MCF 10A (cell line): ENCODE measurements at regions of chr12 and their contacts with region 1.

Region 1: DNA sequence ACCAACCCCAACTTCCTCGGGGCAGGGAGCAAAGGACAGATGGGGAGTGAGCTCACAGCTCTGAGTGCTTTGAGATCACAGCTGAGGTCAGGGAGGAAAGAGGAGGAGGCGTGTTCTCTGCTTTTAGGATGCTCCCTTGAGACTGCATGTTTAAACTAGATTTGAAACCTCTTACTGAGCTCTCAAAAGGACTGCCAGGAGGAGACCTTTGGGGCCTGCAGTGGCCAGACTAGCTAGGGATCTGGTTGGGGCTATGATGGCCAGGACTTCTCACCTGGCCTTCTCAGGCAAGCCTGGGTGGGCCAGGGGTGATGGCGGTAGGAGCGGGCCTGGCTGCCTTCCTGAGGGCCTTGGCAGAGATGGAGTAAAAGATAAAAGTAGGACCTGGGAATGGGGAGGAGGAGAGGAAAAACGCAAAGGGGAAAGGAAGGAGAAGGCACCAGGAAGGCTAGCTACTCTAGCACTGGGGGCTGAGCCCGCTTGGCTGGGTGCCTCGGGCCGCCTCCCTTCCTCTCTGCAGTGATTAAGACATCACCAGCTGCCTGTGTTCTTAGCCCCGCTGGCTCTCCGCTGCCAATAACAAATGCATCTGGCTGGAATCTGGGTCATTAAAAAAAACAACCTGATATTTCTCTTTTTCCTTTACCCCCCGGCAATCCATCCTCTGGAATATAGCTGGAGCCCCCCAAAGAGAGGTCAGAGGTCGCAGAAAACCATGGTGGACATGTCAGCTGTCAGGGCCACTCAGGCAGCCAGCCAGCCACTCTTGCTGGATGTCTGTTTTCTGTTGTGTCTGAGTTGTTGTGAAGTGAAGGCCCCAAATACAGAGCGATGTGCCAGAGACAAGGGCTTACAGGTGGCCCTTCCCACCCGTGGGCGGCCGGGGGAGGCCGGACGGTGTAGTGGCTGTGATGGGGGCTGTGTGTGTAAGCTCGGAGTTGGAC is 141.3 kb downstream of the TSPAN9 start:
- DNase-seq: peak; percentile 87
- H3K4me3 Mint-ChIP-seq: peak overlapping the region; percentile 2
- H3K27ac Mint-ChIP-seq: peak overlapping the region; percentile 95
- H3K4me1 Mint-ChIP-seq: peaks cover 28% of the 10 kb centered on the region
- H3K27me3 Mint-ChIP-seq: no peaks in the 10 kb centered on the region
- CTCF ChIP-seq: no peak

Region 2: GRCh38 chr12:3081886-3082285 is 136.6 kb before region 1 on chr12:
- CTCF ChIA-PET with region 1: no interaction called
- POLR2A ChIA-PET with region 1: no interaction called
- intact Hi-C with region 1: no loop called
- DNase-seq: no peak
- H3K4me3 Mint-ChIP-seq: no peak overlapping the region
- H3K27ac Mint-ChIP-seq: no peak overlapping the region
- H3K4me1 Mint-ChIP-seq: no peaks in the 10 kb centered on the region
- H3K27me3 Mint-ChIP-seq: no peaks in the 10 kb centered on the region
- CTCF ChIP-seq: no peak

Region 3: DNA sequence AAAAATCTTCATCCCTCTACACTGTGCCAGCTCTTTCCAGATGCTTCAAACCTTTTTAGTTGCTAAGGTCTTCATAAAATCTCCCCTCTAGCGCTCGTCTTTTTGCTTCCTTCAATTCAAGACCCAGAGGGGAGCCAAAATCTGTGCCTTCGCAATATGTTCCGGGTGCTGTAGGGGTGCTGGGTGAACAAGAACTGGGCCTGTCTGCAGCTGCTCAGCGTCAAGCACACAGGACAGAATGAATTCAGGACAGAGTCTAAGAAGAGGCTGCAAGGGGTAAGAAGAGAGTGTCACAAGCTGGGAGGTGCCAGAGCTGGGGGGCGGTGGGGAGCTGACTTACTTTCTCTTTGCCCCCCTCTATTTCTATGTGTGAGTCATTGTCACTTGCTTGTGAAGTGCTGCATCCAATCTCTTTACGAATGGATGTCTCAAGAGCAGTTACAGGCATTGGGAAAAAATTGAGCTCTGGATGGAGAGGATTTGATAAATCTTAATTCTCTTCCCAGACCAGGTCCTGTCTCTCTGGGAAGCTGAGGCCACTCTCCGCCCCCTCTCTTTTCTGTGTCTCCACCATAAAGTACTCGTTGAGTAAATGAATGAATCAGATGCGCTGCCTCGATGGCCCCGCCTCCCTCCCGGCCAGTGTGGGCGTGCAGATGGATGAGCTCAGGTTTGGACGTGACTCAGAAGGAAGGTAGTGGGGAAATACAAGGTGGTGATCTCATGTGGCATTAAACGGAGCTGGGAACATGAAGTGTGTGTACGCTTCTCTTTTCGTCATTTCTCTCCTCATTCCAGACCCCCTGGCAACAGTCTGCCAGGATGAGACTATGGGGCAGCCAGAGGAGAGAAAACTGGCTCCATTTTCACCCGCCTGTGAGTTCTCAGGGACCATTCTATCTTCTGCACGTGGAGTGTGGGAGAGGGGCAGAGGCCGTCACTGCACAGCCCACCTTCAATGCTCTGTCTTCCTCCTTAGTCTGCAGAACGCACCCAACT is 50.0 kb before region 1 on chr12:
- CTCF ChIA-PET with region 1: interaction called, 4 read pairs
- POLR2A ChIA-PET with region 1: interaction called, 5 read pairs
- intact Hi-C with region 1: loop called (anchors 1 kb)
- DNase-seq: peak; percentile 97
- H3K4me3 Mint-ChIP-seq: peak overlapping the region; percentile 20
- H3K27ac Mint-ChIP-seq: peak overlapping the region; percentile 66
- H3K4me1 Mint-ChIP-seq: peaks cover 46% of the 10 kb centered on the region
- H3K27me3 Mint-ChIP-seq: no peaks in the 10 kb centered on the region
- CTCF ChIP-seq: no peak